Activated B cell treated with CpG ODN at 0.5 μM for 24 hours (primary cell): ENCODE measurements at regions of chr1 and their contacts with region 1.

Region 1: GRCh38 chr1:10459181-10459580 is 9.3 kb downstream of the CORT start:
- DNase-seq: no peak
- ATAC-seq: no peak
- H3K4me3 Mint-ChIP-seq: no peak overlapping the region
- H3K27ac Mint-ChIP-seq: no peak overlapping the region
- H3K4me1 Mint-ChIP-seq: no peaks in the 10 kb centered on the region
- H3K27me3 Mint-ChIP-seq: no peaks in the 10 kb centered on the region
- CTCF ChIP-seq: no peak

Region 2: GRCh38 chr1:10438677-10439163 is 20.5 kb before region 1 on chr1:
- CTCF ChIA-PET with region 1: no interaction called
- POLR2A ChIA-PET with region 1: interaction called, 11 read pairs
- intact Hi-C with region 1: no loop called
- DNase-seq: no peak
- ATAC-seq: no peak
- H3K4me3 Mint-ChIP-seq: no peak overlapping the region
- H3K27ac Mint-ChIP-seq: no peak overlapping the region
- H3K4me1 Mint-ChIP-seq: peaks cover 4% of the 10 kb centered on the region
- H3K27me3 Mint-ChIP-seq: no peaks in the 10 kb centered on the region
- CTCF ChIP-seq: no peak